ENCODE measurements at regions of chr14 and their contacts with region 1.

Region 1: GRCh38 chr14:101665515-101666078 is 95.9 kb upstream of the PPP2R5C start:
- DNase-seq: peak; percentile 85
- ATAC-seq: peak; percentile 94
- H3K4me3 ChIP-seq: no peak overlapping the region
- H3K27ac ChIP-seq: no peak overlapping the region
- H3K4me1 ChIP-seq: no peaks in the 10 kb centered on the region
- H3K27me3 ChIP-seq: peaks cover 4% of the 10 kb centered on the region; the same call in 1 of the 2 replicates
- CTCF ChIP-seq: peak; percentile 92

Region 2: DNA sequence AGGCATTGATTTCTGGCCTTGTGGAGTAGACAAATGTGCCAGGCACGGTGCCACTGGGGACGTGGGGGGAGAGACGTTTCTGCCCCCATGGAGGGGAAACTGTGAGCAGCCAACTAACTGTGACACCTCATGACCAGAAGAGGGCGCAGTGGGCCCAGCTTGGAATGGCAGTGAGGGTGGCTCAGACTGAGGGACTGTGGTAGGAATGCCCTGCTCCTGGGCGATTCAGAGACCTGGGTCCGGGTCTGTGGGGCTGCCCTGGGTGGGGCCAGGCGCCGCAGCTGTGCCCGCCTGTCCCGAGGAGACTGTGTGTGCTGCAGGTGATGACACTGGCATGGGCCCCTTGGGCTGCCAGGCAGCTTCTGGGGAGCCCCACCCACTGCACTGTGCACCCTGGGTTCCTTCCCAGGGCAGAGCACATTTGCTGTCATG is 1281.9 kb before region 1 on chr14:
- CTCF ChIA-PET with region 1: no interaction called
- POLR2A ChIA-PET with region 1: no interaction called
- intact Hi-C with region 1: loop called (anchors 10 kb)
- DNase-seq: peak; percentile 76
- ATAC-seq: peak; percentile 61
- H3K4me3 ChIP-seq: no peak overlapping the region
- H3K27ac ChIP-seq: no peak overlapping the region; the same call in 1 of the 2 replicates
- H3K4me1 ChIP-seq: peaks cover 33% of the 10 kb centered on the region
- H3K27me3 ChIP-seq: no peaks in the 10 kb centered on the region
- CTCF ChIP-seq: peak; percentile 90

Region 3: GRCh38 chr14:100662879-100663760 is 1002.5 kb before region 1 on chr14:
- CTCF ChIA-PET with region 1: no interaction called
- POLR2A ChIA-PET with region 1: no interaction called
- intact Hi-C with region 1: loop called (anchors 10 kb)
- DNase-seq: peak; percentile 72
- ATAC-seq: no peak
- H3K4me3 ChIP-seq: no peak overlapping the region
- H3K27ac ChIP-seq: no peak overlapping the region
- H3K4me1 ChIP-seq: peaks cover 23% of the 10 kb centered on the region
- H3K27me3 ChIP-seq: no peaks in the 10 kb centered on the region
- CTCF ChIP-seq: peak; percentile 97

Region 4: DNA sequence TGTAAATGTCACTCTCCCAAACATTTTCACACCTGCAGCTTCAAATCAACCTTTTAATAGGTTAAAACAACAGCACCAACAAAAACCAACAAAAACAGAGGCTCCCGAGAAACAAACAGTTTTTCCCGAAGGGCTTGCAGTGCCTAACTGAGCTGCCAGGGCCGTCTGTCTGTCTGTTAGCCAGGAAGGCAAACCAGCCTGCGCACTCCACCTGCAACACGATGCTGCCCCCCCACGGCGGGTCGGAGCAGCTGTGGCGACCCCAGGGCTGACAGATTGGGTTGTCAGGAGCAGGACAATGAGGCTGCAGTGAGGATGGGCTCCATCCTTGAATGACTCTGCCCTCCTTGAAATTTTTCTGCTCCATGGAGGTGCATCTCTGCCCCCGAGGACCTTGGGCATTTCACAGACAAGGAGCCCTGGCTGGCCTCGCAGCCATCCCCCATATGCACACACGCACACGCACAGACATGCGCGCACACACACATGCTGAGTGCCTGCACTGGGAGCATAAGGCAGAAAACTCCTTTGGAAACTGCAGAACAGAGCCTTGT is 764.7 kb before region 1 on chr14:
- CTCF ChIA-PET with region 1: no interaction called
- POLR2A ChIA-PET with region 1: no interaction called
- intact Hi-C with region 1: loop called (anchors 10 kb)
- DNase-seq: peak; percentile 48
- ATAC-seq: peak; percentile 65
- H3K4me3 ChIP-seq: peak overlapping the region; percentile 56
- H3K27ac ChIP-seq: no peak overlapping the region
- H3K4me1 ChIP-seq: peaks cover 8% of the 10 kb centered on the region
- H3K27me3 ChIP-seq: peaks cover 21% of the 10 kb centered on the region
- CTCF ChIP-seq: peak; percentile 61

Region 5: GRCh38 chr14:101241807-101242278 is 423.8 kb before region 1 on chr14:
- CTCF ChIA-PET with region 1: no interaction called
- POLR2A ChIA-PET with region 1: no interaction called
- intact Hi-C with region 1: loop called (anchors 1 kb)
- DNase-seq: peak; percentile 66
- ATAC-seq: peak; percentile 71
- H3K4me3 ChIP-seq: no peak overlapping the region
- H3K27ac ChIP-seq: no peak overlapping the region
- H3K4me1 ChIP-seq: peaks cover 11% of the 10 kb centered on the region
- H3K27me3 ChIP-seq: no peaks in the 10 kb centered on the region
- CTCF ChIP-seq: no peak

Region 6: DNA sequence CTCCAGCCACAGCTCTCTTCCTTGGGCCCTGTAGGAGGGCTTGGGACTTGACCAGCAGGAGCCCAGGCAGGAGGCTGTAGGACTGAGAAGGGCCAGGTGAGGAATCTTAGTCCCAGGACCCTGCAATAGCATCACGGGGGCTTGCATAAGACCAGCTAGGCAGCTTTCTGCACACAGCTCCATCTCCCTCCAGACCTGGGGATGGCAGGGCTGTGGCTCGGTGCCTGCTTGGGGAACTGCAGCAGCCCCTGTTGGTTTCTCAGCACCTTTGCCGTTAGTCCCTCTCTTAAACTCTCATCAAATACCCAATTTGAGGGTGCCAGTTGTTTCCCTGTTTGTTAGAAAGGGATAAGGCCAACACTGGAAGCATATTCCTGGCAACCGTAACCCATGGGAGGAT is 90.0 kb before region 1 on chr14:
- CTCF ChIA-PET with region 1: no interaction called
- POLR2A ChIA-PET with region 1: interaction called, 37 read pairs
- intact Hi-C with region 1: no loop called
- DNase-seq: no peak
- ATAC-seq: no peak
- H3K4me3 ChIP-seq: no peak overlapping the region
- H3K27ac ChIP-seq: no peak overlapping the region
- H3K4me1 ChIP-seq: peaks cover 7% of the 10 kb centered on the region; the same call in 1 of the 2 replicates
- H3K27me3 ChIP-seq: peaks cover 3% of the 10 kb centered on the region; the same call in 1 of the 2 replicates
- CTCF ChIP-seq: no peak